Activated naive CD4-positive, alpha-beta T cell treated with anti-CD3 and anti-CD28 coated beads for 36 hours (primary cell): ENCODE measurements at regions of chr3 and their contacts with region 1.

Region 1: DNA sequence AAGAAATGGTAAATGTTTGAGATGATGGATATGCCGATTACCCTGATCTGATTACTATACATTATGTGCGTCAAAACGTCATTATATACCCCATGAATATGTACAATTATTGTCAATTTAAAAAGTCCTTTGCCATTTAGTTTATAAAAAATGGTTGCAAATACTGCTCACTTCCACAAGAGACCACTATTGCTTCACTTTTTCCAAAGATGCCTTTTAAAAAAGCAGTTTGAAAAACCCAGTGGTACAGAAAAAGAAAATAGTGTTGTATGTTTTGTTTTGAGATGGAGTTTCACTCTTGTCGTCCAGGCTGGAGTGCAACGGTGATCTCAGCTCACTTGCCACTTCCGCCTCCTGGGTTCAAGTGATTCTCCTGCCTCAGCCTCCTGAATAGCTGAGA is 39.3 kb downstream of the EDEM1 start:
- DNase-seq: no peak
- H3K4me3 Mint-ChIP-seq: no peak overlapping the region
- H3K27ac Mint-ChIP-seq: no peak overlapping the region
- H3K4me1 Mint-ChIP-seq: no peaks in the 10 kb centered on the region
- H3K27me3 Mint-ChIP-seq: peaks cover 3% of the 10 kb centered on the region

Region 2: DNA sequence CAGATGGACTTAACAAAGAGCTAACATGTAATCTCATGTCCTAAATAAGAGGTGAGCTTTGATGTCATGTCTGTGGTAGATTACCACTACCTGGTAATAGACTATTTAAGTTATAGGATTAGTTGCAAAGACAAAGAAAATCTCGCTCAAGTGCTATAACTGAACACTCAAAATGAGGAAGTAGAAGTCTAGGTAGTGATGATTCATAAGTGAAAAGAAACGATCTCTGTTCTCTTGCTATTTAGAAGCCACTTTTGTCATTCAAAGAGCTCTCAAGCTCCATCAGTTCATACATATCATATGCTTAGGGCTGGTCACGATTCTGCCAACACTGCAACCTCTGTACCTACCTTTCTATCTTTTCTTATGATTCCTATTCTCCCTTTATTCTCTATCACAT is 71.7 kb after region 1 on chr3:
- CTCF ChIA-PET with region 1: no interaction called
- intact Hi-C with region 1: loop called (anchors 2 kb)
- DNase-seq: no peak
- H3K4me3 Mint-ChIP-seq: no peak overlapping the region
- H3K27ac Mint-ChIP-seq: no peak overlapping the region
- H3K4me1 Mint-ChIP-seq: peaks cover 6% of the 10 kb centered on the region
- H3K27me3 Mint-ChIP-seq: no peaks in the 10 kb centered on the region

Region 3: GRCh38 chr3:5426094-5426883 is 199.5 kb after region 1 on chr3:
- CTCF ChIA-PET with region 1: no interaction called
- intact Hi-C with region 1: loop called (anchors 1 kb)
- DNase-seq: peak; percentile 84
- H3K4me3 Mint-ChIP-seq: no peak overlapping the region
- H3K27ac Mint-ChIP-seq: no peak overlapping the region
- H3K4me1 Mint-ChIP-seq: peaks cover 14% of the 10 kb centered on the region
- H3K27me3 Mint-ChIP-seq: peaks cover 7% of the 10 kb centered on the region

Region 4: DNA sequence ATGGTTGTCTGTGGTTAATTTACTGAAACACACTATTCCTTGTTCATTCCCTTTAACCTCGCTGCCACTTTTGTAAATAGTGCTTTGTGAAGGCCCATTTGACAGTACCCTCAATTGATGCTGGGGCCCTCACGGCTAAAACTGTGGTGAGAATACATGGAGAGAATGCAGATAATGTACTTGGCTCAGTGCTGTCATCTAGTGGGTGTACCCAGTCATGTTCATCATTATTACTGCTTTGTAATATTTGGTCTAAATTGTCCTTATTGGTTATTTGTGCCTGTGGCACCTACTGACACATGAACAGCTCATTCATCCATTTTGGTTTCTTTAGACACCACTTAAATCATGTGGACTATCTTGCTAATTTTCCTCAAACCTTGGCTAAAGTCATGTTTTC is 504.3 kb after region 1 on chr3:
- CTCF ChIA-PET with region 1: no interaction called
- intact Hi-C with region 1: loop called (anchors 2 kb)
- DNase-seq: no peak
- H3K4me3 Mint-ChIP-seq: no peak overlapping the region
- H3K27ac Mint-ChIP-seq: no peak overlapping the region
- H3K4me1 Mint-ChIP-seq: no peaks in the 10 kb centered on the region
- H3K27me3 Mint-ChIP-seq: no peaks in the 10 kb centered on the region

Region 5: DNA sequence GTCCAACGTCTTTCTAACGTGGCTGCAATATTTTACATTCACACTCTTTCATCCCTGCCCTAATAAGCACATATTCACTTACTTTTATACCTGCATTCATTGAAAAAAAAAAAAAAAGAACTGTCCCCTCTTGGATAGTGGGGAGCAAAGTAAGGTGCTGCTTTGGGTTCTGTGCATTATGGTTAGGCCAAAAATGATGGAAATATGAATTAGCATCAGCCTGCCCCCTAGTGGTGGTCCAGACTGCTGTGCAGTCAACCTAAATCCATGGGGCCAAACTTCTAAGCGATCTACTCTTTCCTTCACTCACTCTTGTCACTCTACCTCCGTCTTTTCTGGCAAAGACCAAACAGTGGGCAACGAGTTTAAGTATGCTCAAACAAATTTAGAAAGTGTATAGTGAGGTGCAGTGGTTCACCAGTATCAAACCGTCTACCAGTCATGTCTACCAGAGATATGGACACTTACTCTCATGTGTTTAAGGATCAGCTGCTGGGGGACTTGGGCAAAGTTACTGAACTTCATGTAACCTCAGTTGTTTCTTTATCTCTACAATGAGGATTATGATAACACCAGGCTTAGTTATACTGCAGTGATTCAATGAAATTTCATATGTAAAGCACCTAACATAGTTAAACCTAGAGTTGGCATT is 1572.6 kb after region 1 on chr3:
- CTCF ChIA-PET with region 1: no interaction called
- intact Hi-C with region 1: loop called (anchors 5 kb)
- DNase-seq: peak; percentile 62
- H3K4me3 Mint-ChIP-seq: no peak overlapping the region
- H3K27ac Mint-ChIP-seq: no peak overlapping the region
- H3K4me1 Mint-ChIP-seq: no peaks in the 10 kb centered on the region
- H3K27me3 Mint-ChIP-seq: no peaks in the 10 kb centered on the region